CD4-positive, alpha-beta T cell (primary cell): ENCODE measurements at regions of chr14 and their contacts with region 1.

Region 1: DNA sequence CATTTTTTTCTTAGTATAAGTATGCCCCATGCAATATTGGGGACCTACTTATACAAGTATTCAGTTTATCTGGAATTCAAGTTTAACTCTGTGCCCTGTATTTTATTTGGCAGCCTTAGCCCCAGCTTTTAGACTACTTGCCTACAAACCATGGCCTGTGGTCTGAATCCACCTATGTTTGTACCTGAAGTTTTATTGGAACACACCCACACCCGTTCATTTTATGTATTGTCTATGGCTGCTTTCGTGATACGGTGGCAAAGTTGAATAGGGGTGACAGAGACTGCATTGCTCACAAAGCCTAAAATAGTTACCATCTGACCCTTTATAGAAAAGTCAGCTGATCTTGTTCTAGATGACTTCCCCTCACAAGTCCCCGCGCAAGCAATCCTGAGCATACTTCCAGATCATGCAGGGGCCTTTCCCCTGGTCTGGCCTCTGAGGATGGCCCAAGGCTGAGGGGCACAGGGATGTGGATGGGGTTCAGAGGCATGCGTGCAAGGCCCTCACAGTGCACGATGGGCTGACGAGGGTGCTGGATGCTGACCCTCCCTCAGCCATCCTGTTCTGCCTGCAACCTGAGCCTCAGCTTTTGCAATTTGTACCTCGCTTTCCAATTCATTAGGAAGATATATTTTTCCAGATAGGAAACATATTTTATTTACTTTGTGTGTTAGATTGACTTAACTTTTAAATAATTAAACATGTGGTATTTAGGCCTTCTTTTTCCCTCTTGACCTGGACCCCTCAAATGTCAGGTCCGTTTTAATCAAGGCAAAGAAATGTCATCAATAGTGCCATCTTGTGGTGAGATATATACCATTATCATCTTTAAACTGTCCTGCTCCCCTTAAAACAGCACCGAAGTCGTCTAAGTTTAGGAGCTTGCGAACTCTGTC is 527.3 kb upstream of the CCDC196 start:
- DNase-seq: peak in 4 of 14 experiments; percentile 5 to 68 (median 60)
- ATAC-seq: peak; percentile 58
- H3K4me3 ChIP-seq: no peak overlapping the region
- H3K4me3 Mint-ChIP-seq: no peak overlapping the region
- H3K27ac ChIP-seq: no peak overlapping the region
- H3K27ac Mint-ChIP-seq: no peak overlapping the region
- H3K4me1 ChIP-seq: peaks cover 27% of the 10 kb centered on the region
- H3K4me1 Mint-ChIP-seq: peaks cover 26% of the 10 kb centered on the region
- H3K27me3 ChIP-seq: no peaks in the 10 kb centered on the region
- H3K27me3 Mint-ChIP-seq: no peaks in the 10 kb centered on the region
- CTCF ChIP-seq: peak; percentile 83

Region 2: GRCh38 chr14:65164068-65164824 is 794.7 kb before region 1 on chr14:
- CTCF ChIA-PET with region 1: interaction called, 7 read pairs
- POLR2A ChIA-PET with region 1: interaction called, 3 read pairs
- intact Hi-C with region 1: loop called (anchors 1 to 2 kb)
- DNase-seq: peak in 13 of 14 experiments; percentile 4 to 79 (median 21)
- ATAC-seq: peak; percentile 54
- H3K4me3 ChIP-seq: no peak overlapping the region
- H3K4me3 Mint-ChIP-seq: no peak overlapping the region
- H3K27ac ChIP-seq: no peak overlapping the region
- H3K27ac Mint-ChIP-seq: no peak overlapping the region
- H3K4me1 ChIP-seq: no peaks in the 10 kb centered on the region
- H3K4me1 Mint-ChIP-seq: peaks cover 5% of the 10 kb centered on the region
- H3K27me3 ChIP-seq: no peaks in the 10 kb centered on the region
- H3K27me3 Mint-ChIP-seq: no peaks in the 10 kb centered on the region
- CTCF ChIP-seq: peak; percentile 93

Region 3: DNA sequence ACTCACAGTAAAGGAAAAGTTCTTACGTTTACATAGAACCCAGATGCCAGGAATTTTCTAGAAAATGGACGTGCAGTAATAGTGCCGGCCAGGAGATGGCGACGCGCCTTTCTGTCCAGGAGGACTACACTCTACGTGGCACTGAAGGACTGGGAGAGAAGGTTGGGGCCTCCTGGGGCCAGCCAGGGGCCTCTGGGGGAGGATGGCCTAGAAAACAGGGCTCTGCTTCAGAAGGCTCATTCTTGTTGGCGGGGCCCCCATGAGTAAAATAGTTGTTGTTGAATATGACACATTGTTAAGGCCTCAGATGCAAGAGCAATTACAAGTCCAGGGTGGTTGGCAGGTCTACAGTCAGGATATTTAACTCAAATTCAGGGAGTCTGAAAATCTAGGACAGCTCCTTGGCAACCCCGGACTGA is 736.5 kb before region 1 on chr14:
- CTCF ChIA-PET with region 1: no interaction called
- POLR2A ChIA-PET with region 1: no interaction called
- intact Hi-C with region 1: loop called (anchors 5 kb)
- DNase-seq: peak; percentile 22 to 75 (median 46)
- ATAC-seq: peak; percentile 79
- H3K4me3 ChIP-seq: no peak overlapping the region
- H3K4me3 Mint-ChIP-seq: no peak overlapping the region
- H3K27ac ChIP-seq: no peak overlapping the region
- H3K27ac Mint-ChIP-seq: peak overlapping the region; percentile 3
- H3K4me1 ChIP-seq: peaks cover 42% of the 10 kb centered on the region
- H3K4me1 Mint-ChIP-seq: peaks cover 33% of the 10 kb centered on the region
- H3K27me3 ChIP-seq: no peaks in the 10 kb centered on the region
- H3K27me3 Mint-ChIP-seq: no peaks in the 10 kb centered on the region
- CTCF ChIP-seq: peak; percentile 76

Region 4: DNA sequence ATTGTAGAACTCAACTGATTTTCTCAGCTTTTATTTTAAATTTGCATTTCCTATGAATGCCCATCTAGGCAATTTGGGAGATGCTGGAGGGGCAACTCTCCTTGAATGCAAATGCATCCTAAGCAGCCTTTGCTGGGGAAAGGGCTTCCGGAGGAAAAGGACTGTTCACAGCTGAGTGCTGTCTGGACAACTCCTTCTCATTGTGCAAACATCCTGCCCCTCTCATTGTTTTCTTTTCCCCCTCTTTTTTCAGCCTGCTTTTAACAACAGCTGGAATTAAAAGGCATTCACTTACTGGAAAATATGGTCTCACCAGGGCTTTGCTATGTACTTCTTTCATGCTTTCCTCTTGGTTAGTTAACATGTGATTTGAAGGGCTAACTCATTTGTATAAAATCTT is 148.6 kb before region 1 on chr14:
- CTCF ChIA-PET with region 1: interaction called, 3 read pairs
- POLR2A ChIA-PET with region 1: no interaction called
- intact Hi-C with region 1: loop called in 1 of 2 experiments (anchors 2 kb)
- DNase-seq: no peak
- ATAC-seq: no peak
- H3K4me3 ChIP-seq: no peak overlapping the region
- H3K4me3 Mint-ChIP-seq: no peak overlapping the region
- H3K27ac ChIP-seq: no peak overlapping the region
- H3K27ac Mint-ChIP-seq: no peak overlapping the region
- H3K4me1 ChIP-seq: no peaks in the 10 kb centered on the region
- H3K4me1 Mint-ChIP-seq: peaks cover 5% of the 10 kb centered on the region
- H3K27me3 ChIP-seq: no peaks in the 10 kb centered on the region
- H3K27me3 Mint-ChIP-seq: no peaks in the 10 kb centered on the region
- CTCF ChIP-seq: no peak

Region 5: GRCh38 chr14:66003082-66003725 is 44.3 kb after region 1 on chr14:
- CTCF ChIA-PET with region 1: no interaction called
- POLR2A ChIA-PET with region 1: no interaction called
- intact Hi-C with region 1: no loop called
- DNase-seq: no peak
- ATAC-seq: no peak
- H3K4me3 ChIP-seq: no peak overlapping the region
- H3K4me3 Mint-ChIP-seq: no peak overlapping the region
- H3K27ac ChIP-seq: no peak overlapping the region
- H3K27ac Mint-ChIP-seq: no peak overlapping the region
- H3K4me1 ChIP-seq: no peaks in the 10 kb centered on the region
- H3K4me1 Mint-ChIP-seq: no peaks in the 10 kb centered on the region
- H3K27me3 ChIP-seq: no peaks in the 10 kb centered on the region
- H3K27me3 Mint-ChIP-seq: peaks cover 4% of the 10 kb centered on the region
- CTCF ChIP-seq: no peak

Region 6: DNA sequence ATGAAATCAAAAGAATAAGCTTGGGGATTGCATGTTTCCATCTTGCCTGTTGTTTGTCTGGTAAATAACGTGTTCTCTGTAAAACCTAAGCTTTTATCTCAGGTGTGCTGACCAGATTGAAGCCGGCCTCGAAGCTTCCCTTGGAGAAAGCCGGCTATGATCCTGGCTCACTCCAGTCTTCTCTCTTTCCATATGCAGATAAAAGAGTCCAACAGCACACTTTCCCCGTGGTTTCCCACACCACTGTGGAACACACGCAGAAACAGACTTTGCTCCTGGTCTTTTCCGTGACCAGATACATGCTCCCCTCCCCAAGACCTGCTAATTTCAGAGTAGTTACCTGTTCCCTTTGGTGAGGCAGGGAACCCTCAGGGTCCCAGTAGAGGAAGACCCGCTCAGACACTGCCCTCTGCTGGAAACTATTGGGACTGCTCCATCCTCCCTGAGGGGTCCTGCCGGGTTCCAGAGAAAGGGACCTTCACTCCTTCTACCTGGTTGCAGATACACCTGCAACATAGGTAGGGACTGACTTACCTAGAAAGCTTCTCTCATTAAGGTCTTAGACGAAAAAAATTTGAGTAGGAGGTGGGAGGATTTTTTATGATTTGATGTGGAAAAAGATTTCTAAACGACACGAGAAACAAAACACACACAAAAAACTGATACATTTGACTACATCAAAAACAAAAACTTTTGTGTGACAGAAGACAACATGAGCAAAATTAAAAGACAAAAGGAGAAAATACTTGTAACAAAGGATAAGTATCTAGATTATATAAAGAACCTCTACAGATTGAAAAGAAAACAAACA is 111.8 kb after region 1 on chr14:
- CTCF ChIA-PET with region 1: interaction called, 3 read pairs
- POLR2A ChIA-PET with region 1: no interaction called
- intact Hi-C with region 1: loop called in 1 of 2 experiments (anchors 5 kb)
- DNase-seq: peak; percentile 49 to 80 (median 69)
- ATAC-seq: peak; percentile 93
- H3K4me3 ChIP-seq: no peak overlapping the region
- H3K4me3 Mint-ChIP-seq: no peak overlapping the region
- H3K27ac ChIP-seq: no peak overlapping the region
- H3K27ac Mint-ChIP-seq: no peak overlapping the region
- H3K4me1 ChIP-seq: peaks cover 4% of the 10 kb centered on the region
- H3K4me1 Mint-ChIP-seq: peaks cover 4% of the 10 kb centered on the region
- H3K27me3 ChIP-seq: no peaks in the 10 kb centered on the region
- H3K27me3 Mint-ChIP-seq: peaks cover 5% of the 10 kb centered on the region
- CTCF ChIP-seq: peak; percentile 97

Region 7: DNA sequence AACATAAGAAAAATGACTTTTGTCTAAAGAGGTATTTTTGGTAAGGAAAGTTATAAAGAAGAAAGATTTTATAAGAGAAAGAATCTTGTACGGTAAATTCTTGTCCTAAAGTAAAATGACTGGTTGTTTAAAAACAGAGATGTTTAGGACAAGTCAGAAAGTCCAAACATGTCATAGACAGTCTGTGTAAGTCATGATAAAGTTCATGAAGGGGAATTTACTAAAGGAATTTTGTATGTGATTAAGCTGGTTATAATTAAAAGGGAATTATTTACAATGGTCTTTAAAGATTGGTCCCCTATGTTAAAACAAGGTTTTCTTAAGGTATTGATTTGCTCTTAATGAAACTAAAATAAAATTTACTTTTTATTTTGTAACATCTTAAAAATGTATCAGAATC is 257.9 kb after region 1 on chr14:
- CTCF ChIA-PET with region 1: no interaction called
- POLR2A ChIA-PET with region 1: no interaction called
- intact Hi-C with region 1: no loop called
- DNase-seq: no peak
- ATAC-seq: no peak
- H3K4me3 ChIP-seq: no peak overlapping the region
- H3K4me3 Mint-ChIP-seq: no peak overlapping the region
- H3K27ac ChIP-seq: no peak overlapping the region
- H3K27ac Mint-ChIP-seq: no peak overlapping the region
- H3K4me1 ChIP-seq: no peaks in the 10 kb centered on the region
- H3K4me1 Mint-ChIP-seq: no peaks in the 10 kb centered on the region
- H3K27me3 ChIP-seq: peaks cover 0 to 13% of the 10 kb centered on the region in 2 experiments
- H3K27me3 Mint-ChIP-seq: no peaks in the 10 kb centered on the region
- CTCF ChIP-seq: no peak